Mammary epithelial cell (primary cell): ENCODE measurements at regions of chr11 and their contacts with region 1.

Region 1: GRCh38 chr11:66222358-66223149 is 45.9 kb upstream of the RAB1B start:
- DNase-seq: peak; percentile 88
- H3K4me3 ChIP-seq: no peak overlapping the region
- H3K27ac ChIP-seq: no peak overlapping the region
- H3K4me1 ChIP-seq: no peaks in the 10 kb centered on the region
- H3K27me3 ChIP-seq: no peaks in the 10 kb centered on the region
- CTCF ChIP-seq: peak; percentile 100

Region 2: DNA sequence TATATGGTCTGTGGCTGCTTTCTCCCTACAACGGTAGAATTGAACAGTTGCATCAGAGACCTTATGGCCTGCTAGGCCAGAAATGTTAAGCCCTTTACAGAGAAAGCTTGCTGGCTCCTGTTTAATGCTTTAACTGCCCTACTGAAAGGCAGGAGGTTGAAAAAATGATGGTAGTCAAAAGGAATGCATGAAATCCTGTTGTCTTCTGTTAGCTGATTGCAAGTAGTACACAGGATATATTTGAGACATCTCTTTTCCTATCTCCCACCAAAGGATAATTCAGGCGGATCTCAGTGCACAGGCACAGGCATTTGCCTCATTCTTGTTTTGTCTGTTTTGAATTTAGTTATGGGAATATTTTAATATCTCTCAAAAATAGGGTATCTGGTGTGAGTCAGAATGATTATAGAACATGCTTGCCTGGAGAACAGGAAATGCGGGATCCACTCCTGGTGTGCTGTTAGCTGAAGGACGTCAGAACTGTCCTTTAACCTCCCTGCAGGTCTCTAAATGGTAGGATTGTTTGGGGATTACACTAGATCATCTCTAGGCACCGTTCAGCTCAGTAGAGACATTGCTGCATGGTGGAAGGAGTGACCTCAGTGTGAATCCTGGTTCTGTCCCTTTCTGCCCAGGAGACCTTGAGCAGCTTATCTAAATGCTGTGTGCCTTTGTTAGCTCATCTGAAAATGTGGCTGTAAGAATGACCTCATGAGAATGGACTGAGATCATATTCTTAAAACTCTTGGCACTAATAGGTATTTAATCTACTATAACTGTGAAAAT is 103.0 kb before region 1 on chr11:
- CTCF ChIA-PET with region 1: no interaction called
- dilution Hi-C with region 1: loop called (anchors 5 kb)
- in situ Hi-C with region 1: no loop called
- intact Hi-C with region 1: no loop called
- DNase-seq: peak; percentile 77
- H3K4me3 ChIP-seq: no peak overlapping the region
- H3K27ac ChIP-seq: peak overlapping the region; percentile 54
- H3K4me1 ChIP-seq: peaks cover 18% of the 10 kb centered on the region
- H3K27me3 ChIP-seq: no peaks in the 10 kb centered on the region
- CTCF ChIP-seq: no peak

Region 3: GRCh38 chr11:66172143-66172542 is 50.4 kb before region 1 on chr11:
- CTCF ChIA-PET with region 1: no interaction called
- dilution Hi-C with region 1: no loop called
- in situ Hi-C with region 1: no loop called
- intact Hi-C with region 1: no loop called
- DNase-seq: peak; percentile 58
- H3K4me3 ChIP-seq: no peak overlapping the region
- H3K27ac ChIP-seq: no peak overlapping the region
- H3K4me1 ChIP-seq: peaks cover 5% of the 10 kb centered on the region
- H3K27me3 ChIP-seq: no peaks in the 10 kb centered on the region
- CTCF ChIP-seq: no peak

Region 4: DNA sequence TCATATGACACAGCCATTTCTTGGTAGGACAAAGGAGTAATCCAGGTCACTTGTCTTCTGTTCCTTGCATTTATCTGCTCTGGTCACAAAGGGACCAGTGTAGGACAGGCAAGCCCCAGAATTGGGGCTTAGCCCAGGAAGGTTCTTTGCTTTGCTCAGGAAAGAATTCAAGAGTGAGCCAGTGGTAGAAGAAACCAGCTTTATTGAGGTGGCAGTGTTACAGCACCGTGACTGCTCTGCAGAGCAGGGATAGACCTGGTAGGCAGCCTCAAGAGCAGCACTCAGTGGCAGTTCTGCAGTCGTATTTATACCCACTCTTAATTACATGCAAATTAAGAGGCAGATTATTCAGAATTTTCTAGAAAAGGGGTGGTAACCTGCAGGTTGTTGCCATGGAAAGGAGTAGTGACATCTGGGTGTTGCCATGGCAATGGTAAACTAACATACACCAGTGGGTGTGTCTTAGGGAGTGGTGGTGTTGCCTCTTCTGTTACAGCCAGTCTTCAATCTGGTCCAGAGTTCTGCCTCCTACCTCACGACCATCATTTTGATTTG is 39.0 kb before region 1 on chr11:
- CTCF ChIA-PET with region 1: no interaction called
- dilution Hi-C with region 1: no loop called
- in situ Hi-C with region 1: no loop called
- intact Hi-C with region 1: no loop called
- DNase-seq: no peak
- H3K4me3 ChIP-seq: no peak overlapping the region
- H3K27ac ChIP-seq: no peak overlapping the region
- H3K4me1 ChIP-seq: peaks cover 4% of the 10 kb centered on the region
- H3K27me3 ChIP-seq: no peaks in the 10 kb centered on the region
- CTCF ChIP-seq: no peak

Region 5: GRCh38 chr11:66258473-66258893 is 35.9 kb after region 1 on chr11:
- CTCF ChIA-PET with region 1: no interaction called
- dilution Hi-C with region 1: loop called (anchors 5 kb)
- in situ Hi-C with region 1: no loop called
- intact Hi-C with region 1: loop called (anchors 1 kb)
- DNase-seq: no peak
- H3K4me3 ChIP-seq: peak overlapping the region; percentile 64 to 99 (median 78)
- H3K27ac ChIP-seq: peak overlapping the region; percentile 23
- H3K4me1 ChIP-seq: peaks cover 16% of the 10 kb centered on the region
- H3K27me3 ChIP-seq: no peaks in the 10 kb centered on the region
- CTCF ChIP-seq: no peak

Region 6: DNA sequence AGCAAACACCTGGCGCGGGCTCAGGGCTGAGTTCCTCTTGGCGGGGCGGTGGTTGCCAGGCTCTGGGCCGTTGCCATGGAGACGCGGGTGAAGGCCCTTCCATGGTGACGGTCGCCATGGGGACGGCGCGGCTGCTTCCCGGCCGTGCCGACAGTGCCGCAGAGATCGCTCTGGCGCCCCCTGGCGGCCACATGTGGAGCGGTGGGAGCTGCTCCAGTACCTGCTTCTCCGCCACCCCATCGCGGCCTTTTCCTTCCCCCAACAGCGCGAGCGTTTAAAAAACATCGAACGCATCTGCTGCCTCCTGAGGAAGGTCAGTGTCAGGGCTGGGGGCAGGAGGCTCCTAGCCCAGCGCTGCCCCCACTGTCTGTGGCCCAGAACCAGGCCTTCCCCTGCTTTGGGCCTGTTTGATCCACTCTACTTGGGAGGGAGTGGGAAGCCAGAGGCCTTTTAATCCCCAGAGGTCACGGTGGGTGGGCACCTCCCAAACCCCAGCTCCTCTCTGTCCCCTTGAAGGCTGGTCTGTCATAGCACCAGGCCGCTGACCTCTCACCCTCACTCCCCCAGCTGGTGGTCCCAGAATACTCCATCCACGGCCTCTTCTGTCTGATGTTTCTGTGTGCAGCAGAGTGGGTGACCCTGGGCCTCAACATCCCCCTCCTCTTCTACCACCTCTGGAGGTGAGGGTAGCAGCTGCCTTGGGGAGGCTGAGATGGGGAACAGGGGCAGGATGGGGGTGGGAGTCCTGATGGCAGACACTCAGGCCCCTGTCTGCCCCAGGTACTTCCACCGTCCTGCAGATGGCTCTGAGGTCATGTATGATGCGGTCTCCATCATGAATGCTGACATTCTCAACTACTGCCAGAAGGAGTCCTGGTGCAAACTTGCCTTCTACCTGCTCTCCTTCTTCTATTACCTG is 60.2 kb after region 1 on chr11:
- CTCF ChIA-PET with region 1: no interaction called
- dilution Hi-C with region 1: loop called (anchors 5 kb)
- in situ Hi-C with region 1: no loop called
- intact Hi-C with region 1: loop called (anchors 1 kb)
- DNase-seq: peak; percentile 85
- H3K4me3 ChIP-seq: no peak overlapping the region
- H3K27ac ChIP-seq: no peak overlapping the region
- H3K4me1 ChIP-seq: peaks cover 5% of the 10 kb centered on the region
- H3K27me3 ChIP-seq: no peaks in the 10 kb centered on the region
- CTCF ChIP-seq: peak; percentile 78 to 93

Region 7: GRCh38 chr11:66386171-66387069 is 163.9 kb after region 1 on chr11:
- CTCF ChIA-PET with region 1: no interaction called
- dilution Hi-C with region 1: no loop called
- in situ Hi-C with region 1: no loop called
- intact Hi-C with region 1: loop called (anchors 1 kb)
- DNase-seq: peak; percentile 71
- H3K4me3 ChIP-seq: peak overlapping the region; percentile 20 to 31 (median 21)
- H3K27ac ChIP-seq: no peak overlapping the region
- H3K4me1 ChIP-seq: no peaks in the 10 kb centered on the region
- H3K27me3 ChIP-seq: no peaks in the 10 kb centered on the region
- CTCF ChIP-seq: peak; percentile 91 to 95

Region 8: GRCh38 chr11:66579017-66579606 is 356.6 kb after region 1 on chr11:
- CTCF ChIA-PET with region 1: no interaction called
- dilution Hi-C with region 1: no loop called
- in situ Hi-C with region 1: no loop called
- intact Hi-C with region 1: no loop called
- DNase-seq: peak; percentile 56
- H3K4me3 ChIP-seq: no peak overlapping the region
- H3K27ac ChIP-seq: no peak overlapping the region
- H3K4me1 ChIP-seq: no peaks in the 10 kb centered on the region
- H3K27me3 ChIP-seq: no peaks in the 10 kb centered on the region
- CTCF ChIP-seq: peak; percentile 68 to 81